AG04450 (cell line): ENCODE measurements at regions of chr12 and their contacts with region 1.

Region 1: DNA sequence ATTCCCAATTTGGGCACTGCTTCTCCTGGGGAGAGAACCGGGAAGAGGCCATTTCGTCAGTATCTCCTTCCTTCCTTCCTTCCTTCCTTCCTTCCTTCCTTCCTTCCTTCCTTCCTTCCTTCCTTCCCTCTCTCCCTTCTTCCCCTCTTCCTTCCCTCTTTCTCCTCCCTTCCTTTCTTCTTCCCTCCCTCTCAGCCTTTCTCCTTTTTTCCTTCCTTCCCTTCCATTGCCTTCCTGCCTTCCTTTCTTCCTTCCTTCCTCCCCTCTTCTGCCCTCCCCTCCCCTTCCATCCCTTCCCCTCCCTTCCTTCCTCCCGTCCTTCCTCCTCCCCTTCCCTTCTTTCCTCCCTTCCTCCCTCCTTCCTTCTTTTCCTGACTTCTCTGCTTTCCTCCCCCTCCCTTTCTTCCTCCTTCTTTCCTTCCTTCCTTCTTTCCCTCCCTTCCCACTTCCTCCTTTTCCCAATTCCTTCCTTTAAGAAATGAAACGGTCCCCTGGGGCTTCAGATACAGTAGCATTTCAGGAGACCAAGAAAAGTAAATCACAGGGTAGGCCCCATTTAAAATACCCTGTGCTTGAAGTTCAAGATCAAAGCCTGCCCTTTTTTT is 71.8 kb downstream of the ACACB start:
- DNase-seq: no peak
- H3K4me3 ChIP-seq: no peak overlapping the region
- H3K27ac ChIP-seq: no peak overlapping the region
- H3K27me3 ChIP-seq: no peaks in the 10 kb centered on the region
- CTCF ChIP-seq: no peak

Region 2: DNA sequence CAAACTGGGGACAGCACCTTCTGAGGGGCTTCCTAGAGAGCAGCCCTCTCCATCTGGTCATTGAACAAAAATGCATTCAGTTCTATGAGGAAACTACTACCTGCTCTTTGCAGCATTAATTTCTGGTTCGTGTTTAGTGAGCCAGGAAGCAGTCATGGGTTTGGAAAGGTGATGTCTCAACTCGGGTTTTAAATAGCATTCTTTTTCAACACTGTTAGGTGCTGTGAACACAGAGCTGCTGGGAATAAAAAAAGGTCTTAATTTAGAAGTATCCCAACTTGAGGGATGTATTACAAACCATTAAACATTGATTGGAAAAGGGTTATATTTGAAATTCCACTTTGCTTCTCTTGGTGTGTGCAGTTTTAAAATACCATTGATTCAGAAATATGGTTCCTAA is 168.8 kb after region 1 on chr12:
- CTCF ChIA-PET with region 1: no interaction called
- POLR2A ChIA-PET with region 1: interaction called, 12 read pairs
- DNase-seq: no peak
- H3K4me3 ChIP-seq: no peak overlapping the region
- H3K27ac ChIP-seq: peak overlapping the region; percentile 31
- H3K27me3 ChIP-seq: peaks cover 12% of the 10 kb centered on the region
- CTCF ChIP-seq: no peak